Heart left ventricle (tissue), 16 donors: ENCODE measurements at regions of chr4 and their contacts with region 1.

Region 1: DNA sequence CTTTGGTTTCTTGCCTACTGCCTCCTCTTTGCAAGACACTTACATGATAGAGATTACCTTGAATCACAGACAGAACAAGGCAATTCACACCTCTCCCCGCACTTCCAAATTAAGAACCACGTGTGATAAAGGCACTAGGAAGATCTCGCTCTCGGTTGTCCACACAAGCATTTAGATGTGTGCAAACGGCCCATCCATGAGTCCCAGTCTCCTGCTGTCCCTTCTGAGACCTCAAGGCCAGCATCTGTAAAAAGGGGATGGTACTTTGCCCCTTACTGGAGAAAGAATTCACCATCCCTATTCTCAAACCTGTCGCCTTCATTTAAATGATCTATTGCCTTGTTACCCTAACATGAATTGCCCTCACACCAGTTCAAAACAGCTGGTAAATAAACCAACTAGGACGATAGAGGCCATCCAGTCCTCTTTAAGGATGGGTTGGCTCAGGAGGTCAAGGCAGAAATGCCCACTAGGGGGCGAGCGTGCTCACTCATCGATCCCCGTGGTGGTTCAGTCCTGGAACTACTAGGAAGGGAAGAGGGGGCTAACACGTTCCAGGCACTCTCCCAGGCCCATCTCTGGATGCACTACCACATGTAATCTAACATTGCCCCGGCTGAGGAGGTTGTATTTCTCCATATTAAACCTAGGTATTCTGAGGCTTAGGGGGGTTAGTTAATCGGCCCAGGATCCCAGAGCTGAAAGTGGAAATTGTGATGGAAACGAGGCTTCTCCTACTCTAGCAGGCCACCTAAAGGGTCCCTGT is 95.8 kb downstream of the DHX15 start:
- DNase-seq: peak; percentile 57 to 84 (median 66)
- ATAC-seq: peak; percentile 56 to 85 (median 80)
- H3K4me3 ChIP-seq: no peak overlapping the region
- H3K27ac ChIP-seq: peak overlapping the region in 1 of 12 donors; percentile 27
- H3K4me1 ChIP-seq: peaks cover 0 to 9% (median 0%) of the 10 kb centered on the region in 12 donors
- H3K27me3 ChIP-seq: no peaks in the 10 kb centered on the region
- CTCF ChIP-seq: peak; percentile 64 to 88 (median 80)
- POLR2A ChIP-seq: no peak

Region 2: DNA sequence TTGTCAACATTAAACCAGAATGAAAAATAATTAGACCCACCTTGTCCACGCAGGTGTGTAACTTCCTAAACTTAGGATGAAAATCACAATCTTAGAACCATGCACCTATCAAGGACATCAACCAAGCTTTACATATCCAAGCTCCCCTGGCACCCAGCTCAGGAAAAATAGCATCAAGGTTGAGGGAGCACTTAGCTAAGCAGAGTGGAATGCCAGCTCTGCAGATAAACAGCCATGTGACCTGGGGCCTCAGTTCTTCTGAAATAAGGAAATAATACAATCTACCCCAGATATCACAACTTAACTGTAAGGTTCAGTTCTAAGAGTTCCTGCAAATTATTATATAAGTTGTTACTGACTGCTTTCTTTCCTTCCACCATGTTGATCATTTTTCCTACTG is 31.1 kb after region 1 on chr4:
- intact Hi-C with region 1: no loop called
- DNase-seq: peak in 1 of 5 donors; percentile 28
- ATAC-seq: peak; percentile 63 to 81 (median 70)
- H3K4me3 ChIP-seq: no peak overlapping the region
- H3K27ac ChIP-seq: peak overlapping the region in 7 of 12 donors; percentile 10 to 35 (median 20)
- H3K4me1 ChIP-seq: peaks cover 0 to 35% (median 20%) of the 10 kb centered on the region in 12 donors
- H3K27me3 ChIP-seq: no peaks in the 10 kb centered on the region
- CTCF ChIP-seq: no peak
- POLR2A ChIP-seq: no peak

Region 3: GRCh38 chr4:24537025-24537424 is 48.4 kb after region 1 on chr4:
- intact Hi-C with region 1: no loop called
- DNase-seq: no peak
- ATAC-seq: peak in 2 of 4 donors; percentile 46 to 59
- H3K4me3 ChIP-seq: no peak overlapping the region
- H3K27ac ChIP-seq: no peak overlapping the region
- H3K4me1 ChIP-seq: peaks cover 0 to 21% (median 3%) of the 10 kb centered on the region in 12 donors
- H3K27me3 ChIP-seq: no peaks in the 10 kb centered on the region
- CTCF ChIP-seq: no peak
- POLR2A ChIP-seq: no peak

Region 4: DNA sequence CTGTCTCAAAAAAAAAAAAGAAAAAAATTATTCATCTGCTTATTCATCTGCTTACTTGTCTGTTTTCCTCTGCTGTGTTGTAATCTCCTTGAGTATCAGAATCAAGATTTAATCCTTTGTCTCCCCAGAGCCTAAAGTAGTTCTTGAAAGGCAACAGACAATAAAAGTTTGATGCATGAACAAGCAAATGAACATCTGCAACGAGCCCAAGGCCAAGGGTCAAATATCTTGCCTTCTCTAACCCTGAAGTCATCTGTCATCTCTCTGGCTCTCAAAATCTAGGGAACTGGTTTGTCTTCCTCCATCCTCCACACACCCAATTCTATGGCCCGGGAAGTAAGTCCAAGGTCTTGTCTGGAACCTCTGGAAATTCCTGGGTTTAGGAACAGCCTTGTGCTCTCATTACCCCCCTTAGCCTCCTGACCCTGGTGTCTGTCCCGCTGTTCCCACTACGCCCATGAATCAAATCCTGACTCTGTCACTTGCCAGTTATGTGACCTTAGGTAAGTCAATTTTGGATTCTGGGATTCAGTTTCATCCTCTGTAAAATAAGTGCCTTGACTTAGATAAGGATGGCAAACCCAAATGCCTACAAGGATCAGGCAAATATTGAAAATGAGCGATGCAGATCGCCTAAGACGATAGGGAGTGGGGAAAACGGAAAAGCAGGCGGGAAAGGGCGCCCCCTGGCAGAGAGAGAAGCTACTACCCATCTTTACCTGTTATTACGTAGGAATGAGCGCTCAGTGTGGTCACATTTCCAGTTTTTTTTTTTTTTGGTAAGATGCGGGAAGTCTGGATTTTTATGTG is 198.5 kb after region 1 on chr4:
- intact Hi-C with region 1: loop called in 9 of 10 experiments (anchors 2 to 10 kb)
- DNase-seq: no peak
- ATAC-seq: peak in 2 of 4 donors; percentile 45 to 53
- H3K4me3 ChIP-seq: no peak overlapping the region
- H3K27ac ChIP-seq: no peak overlapping the region
- H3K4me1 ChIP-seq: no peaks in the 10 kb centered on the region
- H3K27me3 ChIP-seq: no peaks in the 10 kb centered on the region
- CTCF ChIP-seq: peak; percentile 28 to 59 (median 47)
- POLR2A ChIP-seq: no peak

Region 5: GRCh38 chr4:24794916-24795665 is 306.5 kb after region 1 on chr4 and contains the start of gene SOD3:
- intact Hi-C with region 1: loop called in 1 of 10 experiments (anchors 5 kb)
- DNase-seq: peak; percentile 86 to 90 (median 88)
- ATAC-seq: peak; percentile 96 to 97 (median 96)
- H3K4me3 ChIP-seq: peak within 1 kb of the TSS in 11 of 12 donors; percentile 1 to 60 (median 45)
- H3K27ac ChIP-seq: peak within 1 kb of the TSS; percentile 53 to 92 (median 82)
- H3K4me1 ChIP-seq: peaks cover 0 to 34% (median 14%) of the 10 kb centered on the region in 12 donors
- H3K27me3 ChIP-seq: peaks cover 0 to 14% (median 6%) of the 10 kb centered on the region in 9 donors
- CTCF ChIP-seq: no peak
- POLR2A ChIP-seq: peak in 1 of 2 donors; percentile 63
- total RNA-seq, gene SOD3: 17.0 to 110 (median 43.0) TPM

Region 6: GRCh38 chr4:25144870-25145481 is 656.4 kb after region 1 on chr4:
- intact Hi-C with region 1: loop called in 5 of 10 experiments (anchors 10 kb)
- DNase-seq: no peak
- ATAC-seq: no peak
- H3K4me3 ChIP-seq: no peak overlapping the region
- H3K27ac ChIP-seq: no peak overlapping the region
- H3K4me1 ChIP-seq: peaks cover 0 to 6% (median 0%) of the 10 kb centered on the region in 12 donors
- H3K27me3 ChIP-seq: no peaks in the 10 kb centered on the region
- CTCF ChIP-seq: peak; percentile 28 to 75 (median 62)
- POLR2A ChIP-seq: no peak

Region 7: DNA sequence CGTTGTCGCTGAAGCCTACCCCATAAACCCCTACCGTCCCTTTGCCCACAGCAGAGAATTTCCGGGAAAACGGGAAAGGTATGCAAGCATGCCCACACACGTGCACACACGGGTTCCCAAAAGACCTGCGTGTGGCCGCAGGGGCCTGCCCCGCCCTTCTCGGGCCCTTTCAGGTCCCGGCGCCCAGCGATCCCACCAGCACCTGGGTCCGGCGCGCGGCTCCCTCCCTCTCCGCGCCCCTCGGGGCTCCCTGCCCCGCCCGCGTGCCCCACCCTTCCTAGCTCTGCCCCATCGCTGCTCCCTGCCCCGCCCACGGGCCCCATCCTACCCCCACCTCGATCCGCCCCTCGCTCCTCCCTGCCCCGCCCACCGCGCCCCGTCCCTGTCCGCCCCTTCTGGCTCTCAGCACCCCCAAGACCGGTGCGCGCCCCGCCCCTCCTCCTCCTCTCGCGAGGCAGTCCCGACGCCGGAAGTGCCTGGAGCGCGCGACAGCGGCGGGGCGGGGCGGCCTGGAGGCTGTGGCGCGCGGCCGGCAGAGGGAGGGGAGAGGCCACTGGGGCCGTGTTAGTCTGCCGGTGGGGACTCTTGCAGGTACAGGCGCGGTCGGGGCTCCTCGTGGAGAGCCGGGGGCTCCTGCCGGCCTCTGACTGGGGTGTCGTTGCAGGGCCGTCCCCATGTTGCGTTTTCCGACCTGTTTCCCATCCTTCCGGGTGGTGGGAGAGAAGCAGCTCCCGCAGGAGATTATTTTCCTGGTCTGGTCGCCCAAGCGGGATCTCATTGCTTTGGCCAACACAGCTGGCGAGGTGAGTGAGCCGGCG is 888.4 kb after region 1 on chr4 and contains the start of gene ANAPC4:
- intact Hi-C with region 1: loop called in 1 of 10 experiments (anchors 10 kb)
- DNase-seq: peak; percentile 95 to 98 (median 97)
- ATAC-seq: peak; percentile 95 to 98 (median 98)
- H3K4me3 ChIP-seq: peak within 1 kb of the TSS; percentile 50 to 97 (median 94)
- H3K27ac ChIP-seq: peak within 1 kb of the TSS in 11 of 12 donors; percentile 54 to 86 (median 75)
- H3K4me1 ChIP-seq: peaks cover 0 to 32% (median 10%) of the 10 kb centered on the region in 12 donors
- H3K27me3 ChIP-seq: no peaks in the 10 kb centered on the region
- CTCF ChIP-seq: peak in 5 of 12 donors; percentile 10 to 24 (median 18)
- POLR2A ChIP-seq: peak in 1 of 2 donors; percentile 65
- total RNA-seq, gene ANAPC4: 6.7 to 15.5 (median 12.5) TPM